GM10248 (cell line): ENCODE measurements at regions of chr13 and their contacts with region 1.

Region 1: GRCh38 chr13:24020375-24020830 is 123.1 kb upstream of the C1QTNF9B start:
- DNase-seq: peak; percentile 58
- CTCF ChIP-seq: peak; percentile 67

Region 2: DNA sequence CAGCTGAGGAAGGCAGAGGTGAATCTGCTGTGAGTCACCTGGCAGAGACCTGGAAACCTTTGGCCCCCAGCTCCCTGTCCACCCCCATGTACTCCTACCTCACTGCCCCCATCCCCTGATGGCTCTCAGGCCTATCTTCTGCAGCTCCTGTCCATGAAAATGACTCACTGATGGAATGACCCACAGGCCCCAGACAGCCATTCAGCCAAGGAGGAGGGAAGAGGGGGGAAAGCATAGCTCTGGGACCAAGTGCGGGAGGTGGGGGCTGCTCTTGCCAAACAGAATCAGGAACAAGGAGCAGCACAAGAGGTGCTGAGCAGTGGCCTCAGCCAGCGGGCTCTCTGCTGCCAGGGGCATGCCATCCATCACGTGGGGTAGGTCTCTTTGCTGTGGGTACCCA is 11.7 kb before region 1 on chr13:
- CTCF ChIA-PET with region 1: interaction called, 26 read pairs
- POLR2A ChIA-PET with region 1: no interaction called
- DNase-seq: no peak
- CTCF ChIP-seq: no peak

Region 3: DNA sequence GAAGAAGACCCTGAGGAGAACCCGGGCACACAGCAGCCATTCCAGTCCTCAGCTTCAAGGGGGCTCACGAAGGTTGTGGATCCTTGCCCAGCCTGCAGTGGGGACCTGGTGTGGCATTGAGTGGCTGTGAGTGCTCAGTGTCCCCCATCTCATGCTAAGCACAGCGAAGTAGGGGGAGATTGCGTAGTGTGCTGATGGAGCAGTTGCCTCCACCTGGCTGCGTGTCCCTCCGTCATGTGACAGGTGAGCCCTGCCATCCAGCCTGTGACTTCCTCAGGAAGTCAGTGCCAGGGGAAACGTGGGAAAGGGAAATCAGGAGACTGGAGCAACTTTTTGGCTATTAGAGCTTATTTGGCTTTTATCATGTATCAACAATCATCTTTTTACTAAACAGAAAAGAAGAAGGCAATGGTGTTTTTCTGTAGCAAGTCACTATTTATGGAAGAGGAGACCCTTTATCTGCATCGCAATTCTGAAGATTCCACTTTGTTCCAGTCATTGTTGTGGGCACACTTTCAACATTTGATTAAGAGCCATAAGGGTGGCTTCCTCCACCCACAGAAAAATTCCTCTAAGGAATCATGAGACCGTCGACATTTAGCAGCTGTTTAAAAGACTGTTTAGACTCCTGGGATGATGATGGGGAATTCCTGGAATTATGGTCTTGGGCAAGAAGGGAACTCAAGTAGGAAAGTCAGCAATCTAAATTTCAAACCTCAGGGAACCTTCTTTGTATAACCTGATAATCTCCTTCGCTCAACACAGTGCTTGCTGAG is 13.3 kb after region 1 on chr13:
- CTCF ChIA-PET with region 1: interaction called, 24 read pairs
- POLR2A ChIA-PET with region 1: no interaction called
- DNase-seq: no peak
- CTCF ChIP-seq: no peak

Region 4: DNA sequence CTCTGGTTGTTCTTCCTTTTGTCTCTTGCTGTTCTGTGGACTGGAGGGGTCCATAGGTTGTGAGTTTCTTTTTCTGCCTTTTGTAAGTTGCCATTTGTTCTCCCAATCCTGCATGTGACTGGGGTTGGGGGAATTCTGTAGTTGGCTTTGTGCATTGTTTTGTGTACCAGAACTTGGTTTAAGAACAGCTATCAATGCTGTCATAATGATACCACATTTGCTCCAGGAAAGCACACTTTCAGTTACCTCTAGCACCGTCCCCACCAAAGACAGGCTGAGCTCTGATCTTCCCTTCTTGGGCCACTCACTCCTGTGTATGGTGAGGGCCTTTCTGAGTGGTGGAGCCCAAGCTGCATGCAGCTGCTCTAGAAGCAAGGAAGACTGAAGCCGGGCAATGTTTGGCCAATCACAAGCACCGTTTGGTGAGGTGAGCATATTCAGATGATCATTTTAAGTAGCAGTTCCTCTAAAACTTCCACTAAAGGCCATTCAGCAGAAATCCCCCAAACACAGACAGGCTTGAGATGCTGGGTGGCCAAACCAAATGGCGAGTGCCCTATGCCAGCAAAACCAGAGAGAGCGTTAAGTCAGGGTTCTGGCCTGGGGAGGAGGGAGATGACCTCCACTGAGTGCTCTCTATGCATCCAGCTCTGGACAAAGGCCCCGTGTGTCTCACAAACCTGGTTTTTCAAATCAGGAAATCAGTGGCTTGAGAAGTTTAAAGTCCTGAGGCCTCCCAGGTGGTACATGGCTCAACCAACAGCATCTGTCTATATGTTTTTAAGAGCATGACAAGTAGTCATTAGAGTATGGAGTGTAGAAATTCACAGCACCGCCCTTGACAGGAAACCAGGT is 19.4 kb after region 1 on chr13:
- CTCF ChIA-PET with region 1: interaction called, 24 read pairs
- POLR2A ChIA-PET with region 1: no interaction called
- DNase-seq: peak; percentile 44
- CTCF ChIP-seq: no peak

Region 5: DNA sequence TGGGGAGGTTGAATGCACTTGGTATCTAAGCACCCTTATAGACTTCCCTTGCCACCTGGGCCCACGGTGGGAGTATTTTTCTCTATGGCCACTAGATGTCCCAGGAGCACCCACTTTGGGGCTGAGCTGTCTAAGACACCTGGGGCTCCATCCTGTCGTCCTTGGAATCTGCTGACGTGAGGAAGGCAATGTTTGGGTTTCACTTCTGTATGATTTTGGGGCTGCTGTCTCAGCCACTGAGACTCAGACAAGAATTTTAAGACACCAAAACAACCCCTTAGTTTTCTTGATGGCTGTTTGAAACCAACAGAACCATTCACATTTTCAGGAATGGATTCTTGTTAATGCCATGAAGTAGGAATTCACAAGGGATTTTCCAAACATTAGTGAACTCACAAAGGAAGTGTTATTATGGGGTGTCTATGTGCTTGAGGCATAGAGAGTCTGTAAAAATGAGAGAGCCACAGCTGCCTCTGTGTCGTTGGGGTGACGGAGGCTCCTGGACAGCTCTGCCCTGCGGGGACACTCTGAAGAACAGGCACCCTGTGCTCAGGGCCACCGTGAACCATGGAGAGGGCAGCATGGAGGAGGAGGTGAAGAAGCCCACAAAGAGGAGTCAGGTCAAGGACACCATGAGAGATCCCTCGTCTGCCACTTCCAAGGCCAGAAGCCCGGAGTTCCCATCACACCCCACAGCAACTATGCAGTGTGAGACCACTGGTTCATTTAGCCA is 33.3 kb after region 1 on chr13:
- CTCF ChIA-PET with region 1: interaction called, 12 read pairs
- POLR2A ChIA-PET with region 1: no interaction called
- DNase-seq: peak; percentile 78
- CTCF ChIP-seq: peak; percentile 74

Region 6: GRCh38 chr13:24220086-24220703 is 199.8 kb after region 1 on chr13:
- CTCF ChIA-PET with region 1: interaction called, 58 read pairs
- POLR2A ChIA-PET with region 1: no interaction called
- DNase-seq: peak; percentile 60
- CTCF ChIP-seq: peak; percentile 82

Region 7: DNA sequence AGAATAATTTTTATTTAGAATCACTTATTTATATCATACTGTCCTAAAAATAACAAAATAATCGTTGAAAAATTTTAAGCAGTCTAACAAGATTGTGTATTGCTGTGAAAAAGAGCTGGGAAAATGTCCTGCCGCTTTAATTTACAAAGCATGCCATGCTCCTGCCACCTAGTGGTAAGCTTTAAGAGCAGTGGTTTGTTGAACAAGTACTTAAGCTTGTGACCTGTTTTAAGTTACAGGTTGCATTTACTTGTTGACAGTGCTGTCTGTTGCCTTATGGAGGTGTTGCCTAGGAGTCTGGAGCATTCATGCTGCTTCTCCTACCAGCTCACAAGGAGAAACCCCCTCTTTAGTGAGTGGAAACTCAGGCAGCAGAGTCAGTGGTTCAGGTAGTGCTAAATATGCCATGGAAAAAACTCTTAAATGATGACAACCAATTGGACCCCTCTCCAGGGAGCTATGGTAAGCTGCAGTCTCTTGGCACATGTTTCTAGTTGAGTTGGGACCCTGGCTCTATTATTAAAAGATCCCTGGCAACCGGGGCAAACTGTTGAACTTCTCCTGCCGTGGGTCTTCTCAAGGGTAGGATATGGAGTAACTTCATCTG is 208.6 kb after region 1 on chr13:
- CTCF ChIA-PET with region 1: interaction called, 84 read pairs
- POLR2A ChIA-PET with region 1: no interaction called
- DNase-seq: peak; percentile 46
- CTCF ChIP-seq: peak; percentile 85